T-cell (primary cell): ENCODE measurements at regions of chr6 and their contacts with region 1.

Region 1: GRCh38 chr6:26065952-26066380 is 21.3 kb upstream of the HFE start:
- DNase-seq: peak in 30 of 35 experiments; percentile 26 to 84 (median 41)
- ATAC-seq: peak; percentile 85 to 88 (median 86)
- H3K4me3 ChIP-seq: no peak overlapping the region
- H3K4me3 Mint-ChIP-seq: no peak overlapping the region
- H3K27ac ChIP-seq: no peak overlapping the region
- H3K27ac Mint-ChIP-seq: no peak overlapping the region
- H3K4me1 ChIP-seq: peaks cover 0 to 3% of the 10 kb centered on the region in 2 experiments
- H3K4me1 Mint-ChIP-seq: peaks cover 5 to 10% (median 10%) of the 10 kb centered on the region in 3 donors
- H3K27me3 ChIP-seq: no peaks in the 10 kb centered on the region
- H3K27me3 Mint-ChIP-seq: no peaks in the 10 kb centered on the region

Region 2: DNA sequence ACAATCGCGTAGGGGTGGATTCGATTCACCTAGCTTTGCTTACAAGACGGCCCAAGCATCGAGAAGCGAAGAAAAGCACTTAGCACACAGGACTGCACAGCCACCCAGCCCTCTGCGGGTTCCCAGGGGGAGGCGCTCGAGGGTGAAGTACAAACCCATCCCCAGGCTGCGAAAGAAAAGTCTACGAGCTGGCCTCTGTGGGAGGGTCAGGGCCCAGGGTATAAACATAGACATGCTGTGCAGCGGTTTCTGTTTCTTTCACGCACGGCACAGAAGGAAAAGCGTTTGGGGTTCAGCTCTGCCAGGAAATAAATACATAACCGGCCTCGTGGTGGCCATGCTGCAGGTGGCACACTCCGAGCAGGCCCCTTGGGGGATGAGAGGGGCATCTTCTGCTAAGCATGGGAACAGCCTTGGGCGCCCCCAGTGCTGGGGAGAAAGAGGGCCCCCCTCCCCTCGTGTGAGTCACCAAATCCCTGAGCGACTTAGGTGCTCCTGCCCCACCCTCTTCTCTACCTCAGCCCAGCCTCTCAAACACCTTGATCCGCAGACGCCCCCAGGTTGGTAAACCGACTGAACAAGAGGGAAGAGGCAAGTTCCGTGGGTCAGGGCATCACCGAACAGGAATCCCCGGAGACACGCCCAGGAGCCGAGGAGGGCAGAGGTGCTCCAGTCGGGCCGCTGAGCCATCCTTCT is 1038.6 kb before region 1 on chr6:
- CTCF ChIA-PET with region 1: no interaction called
- POLR2A ChIA-PET with region 1: no interaction called
- DNase-seq: peak; percentile 58 to 87 (median 76)
- ATAC-seq: peak; percentile 95 to 98 (median 96)
- H3K4me3 ChIP-seq: peak overlapping the region; percentile 35 to 58
- H3K4me3 Mint-ChIP-seq: peak overlapping the region; percentile 72 to 80 (median 75)
- H3K27ac ChIP-seq: peak overlapping the region; percentile 85
- H3K27ac Mint-ChIP-seq: peak overlapping the region; percentile 86 to 91
- H3K4me1 ChIP-seq: peaks cover 21 to 30% of the 10 kb centered on the region in 2 experiments
- H3K4me1 Mint-ChIP-seq: peaks cover 46 to 60% (median 55%) of the 10 kb centered on the region in 3 donors
- H3K27me3 ChIP-seq: no peaks in the 10 kb centered on the region
- H3K27me3 Mint-ChIP-seq: no peaks in the 10 kb centered on the region

Region 3: GRCh38 chr6:26087284-26088115 is 21.5 kb after region 1 on chr6 and contains the start of gene HFE:
- CTCF ChIA-PET with region 1: interaction called, 9 to 24 read pairs
- POLR2A ChIA-PET with region 1: interaction called, 3 read pairs
- DNase-seq: peak in 20 of 35 experiments; percentile 3 to 48 (median 20)
- ATAC-seq: peak; percentile 13 to 33 (median 20)
- H3K4me3 ChIP-seq: peak within 1 kb of the TSS; percentile 61 to 92
- H3K4me3 Mint-ChIP-seq: peak within 1 kb of the TSS; percentile 86 to 87 (median 86)
- H3K27ac ChIP-seq: peak within 1 kb of the TSS; percentile 60
- H3K27ac Mint-ChIP-seq: peak within 1 kb of the TSS; percentile 86 to 90
- H3K4me1 ChIP-seq: peaks cover 17 to 31% of the 10 kb centered on the region in 2 experiments
- H3K4me1 Mint-ChIP-seq: peaks cover 31 to 49% (median 32%) of the 10 kb centered on the region in 3 donors
- H3K27me3 ChIP-seq: no peaks in the 10 kb centered on the region
- H3K27me3 Mint-ChIP-seq: no peaks in the 10 kb centered on the region
- total RNA-seq, gene HFE: 1.0 to 2.4 (median 1.8) TPM

Region 4: GRCh38 chr6:26097268-26097875 is 31.4 kb after region 1 on chr6:
- CTCF ChIA-PET with region 1: interaction called, 18 to 71 read pairs
- POLR2A ChIA-PET with region 1: interaction called, 6 to 7 read pairs
- DNase-seq: peak in 34 of 35 experiments; percentile 26 to 87 (median 54)
- ATAC-seq: peak; percentile 78 to 84 (median 82)
- H3K4me3 ChIP-seq: no peak overlapping the region
- H3K4me3 Mint-ChIP-seq: no peak overlapping the region
- H3K27ac ChIP-seq: no peak overlapping the region
- H3K27ac Mint-ChIP-seq: no peak overlapping the region
- H3K4me1 ChIP-seq: no peaks in the 10 kb centered on the region
- H3K4me1 Mint-ChIP-seq: peaks cover 4 to 7% (median 6%) of the 10 kb centered on the region in 3 donors
- H3K27me3 ChIP-seq: peaks cover 0 to 4% of the 10 kb centered on the region in 2 experiments
- H3K27me3 Mint-ChIP-seq: peaks cover 0 to 3% of the 10 kb centered on the region in 2 donors

Region 5: GRCh38 chr6:26327450-26328264 is 261.7 kb after region 1 on chr6:
- CTCF ChIA-PET with region 1: no interaction called
- POLR2A ChIA-PET with region 1: no interaction called
- DNase-seq: peak in 32 of 35 experiments; percentile 8 to 73 (median 44)
- ATAC-seq: peak in 1 of 4 experiments; percentile 36
- H3K4me3 ChIP-seq: peak overlapping the region; percentile 27 to 31
- H3K4me3 Mint-ChIP-seq: peak overlapping the region; percentile 53 to 66 (median 58)
- H3K27ac ChIP-seq: peak overlapping the region; percentile 43
- H3K27ac Mint-ChIP-seq: peak overlapping the region; percentile 64 to 77
- H3K4me1 ChIP-seq: peaks cover 12 to 31% of the 10 kb centered on the region in 2 experiments
- H3K4me1 Mint-ChIP-seq: peaks cover 47 to 65% (median 56%) of the 10 kb centered on the region in 3 donors
- H3K27me3 ChIP-seq: peaks cover 13 to 19% of the 10 kb centered on the region in 2 experiments
- H3K27me3 Mint-ChIP-seq: peaks cover 7 to 52% of the 10 kb centered on the region in 2 donors

Region 6: DNA sequence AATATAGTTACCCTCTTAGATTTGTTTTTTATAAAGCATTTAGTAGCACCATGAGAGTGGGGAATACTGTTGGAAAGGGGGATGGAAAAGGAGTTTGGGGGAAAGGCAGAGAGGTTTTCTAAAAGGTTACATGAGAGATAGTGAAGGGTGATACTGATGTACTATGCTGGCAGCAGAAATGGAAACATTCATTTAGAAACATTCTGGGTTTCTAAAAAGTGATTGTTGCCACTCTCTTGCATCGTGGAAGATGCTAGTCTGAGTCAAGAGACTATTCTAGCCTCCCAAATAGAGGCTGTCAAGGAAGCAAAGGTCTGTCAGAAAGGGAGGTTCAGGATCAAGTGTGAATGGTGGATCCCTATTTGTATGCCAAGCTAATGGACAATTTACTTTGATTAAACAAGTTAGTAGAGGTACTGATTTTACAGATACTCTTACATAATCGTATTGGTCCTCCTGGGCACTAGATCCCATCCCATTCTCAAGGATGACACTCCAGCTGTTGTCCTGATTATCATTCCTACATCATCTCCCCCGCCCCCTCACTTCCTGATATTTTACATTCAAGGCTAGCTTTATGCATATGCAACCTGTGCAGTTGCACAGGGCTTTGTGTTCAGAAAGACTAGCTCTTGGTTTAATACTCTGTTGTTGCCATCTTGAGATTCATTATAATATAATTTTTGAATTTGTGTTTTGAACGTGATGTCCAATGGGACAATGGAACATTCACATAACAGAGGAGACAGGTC is 515.4 kb after region 1 on chr6:
- CTCF ChIA-PET with region 1: no interaction called
- POLR2A ChIA-PET with region 1: no interaction called
- DNase-seq: no peak
- ATAC-seq: no peak
- H3K4me3 ChIP-seq: no peak overlapping the region
- H3K4me3 Mint-ChIP-seq: no peak overlapping the region
- H3K27ac ChIP-seq: no peak overlapping the region
- H3K27ac Mint-ChIP-seq: no peak overlapping the region
- H3K4me1 ChIP-seq: peaks cover 6 to 9% of the 10 kb centered on the region in 2 experiments
- H3K4me1 Mint-ChIP-seq: peaks cover 12 to 22% (median 18%) of the 10 kb centered on the region in 3 donors
- H3K27me3 ChIP-seq: peaks cover 6 to 15% of the 10 kb centered on the region in 2 experiments
- H3K27me3 Mint-ChIP-seq: peaks cover 13 to 14% of the 10 kb centered on the region in 2 donors

Region 7: DNA sequence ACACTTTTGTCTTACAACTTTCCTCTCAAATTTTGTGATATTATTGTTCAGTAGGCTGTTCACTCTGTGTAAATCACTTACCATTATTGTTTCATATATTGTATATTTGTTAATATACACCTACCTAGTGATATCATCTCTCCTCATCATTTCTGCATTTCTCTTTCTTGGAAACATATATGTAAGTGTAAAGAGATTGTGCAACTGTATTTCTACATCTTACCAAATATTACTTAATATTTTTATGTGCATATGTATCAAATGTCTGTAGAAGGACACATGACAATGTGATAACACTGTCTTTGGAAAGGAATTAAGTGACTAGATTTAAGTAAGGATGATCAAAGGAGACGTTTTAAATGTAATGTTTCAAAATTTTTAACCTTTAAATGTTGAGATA is 563.4 kb after region 1 on chr6:
- CTCF ChIA-PET with region 1: no interaction called
- POLR2A ChIA-PET with region 1: no interaction called
- DNase-seq: no peak
- ATAC-seq: no peak
- H3K4me3 ChIP-seq: no peak overlapping the region
- H3K4me3 Mint-ChIP-seq: no peak overlapping the region
- H3K27ac ChIP-seq: no peak overlapping the region
- H3K27ac Mint-ChIP-seq: no peak overlapping the region
- H3K4me1 ChIP-seq: no peaks in the 10 kb centered on the region
- H3K4me1 Mint-ChIP-seq: no peaks in the 10 kb centered on the region
- H3K27me3 ChIP-seq: no peaks in the 10 kb centered on the region
- H3K27me3 Mint-ChIP-seq: peaks cover 3 to 16% of the 10 kb centered on the region in 2 donors